ENCODE measurements at regions of chr15 and their contacts with region 1.

Region 1: DNA sequence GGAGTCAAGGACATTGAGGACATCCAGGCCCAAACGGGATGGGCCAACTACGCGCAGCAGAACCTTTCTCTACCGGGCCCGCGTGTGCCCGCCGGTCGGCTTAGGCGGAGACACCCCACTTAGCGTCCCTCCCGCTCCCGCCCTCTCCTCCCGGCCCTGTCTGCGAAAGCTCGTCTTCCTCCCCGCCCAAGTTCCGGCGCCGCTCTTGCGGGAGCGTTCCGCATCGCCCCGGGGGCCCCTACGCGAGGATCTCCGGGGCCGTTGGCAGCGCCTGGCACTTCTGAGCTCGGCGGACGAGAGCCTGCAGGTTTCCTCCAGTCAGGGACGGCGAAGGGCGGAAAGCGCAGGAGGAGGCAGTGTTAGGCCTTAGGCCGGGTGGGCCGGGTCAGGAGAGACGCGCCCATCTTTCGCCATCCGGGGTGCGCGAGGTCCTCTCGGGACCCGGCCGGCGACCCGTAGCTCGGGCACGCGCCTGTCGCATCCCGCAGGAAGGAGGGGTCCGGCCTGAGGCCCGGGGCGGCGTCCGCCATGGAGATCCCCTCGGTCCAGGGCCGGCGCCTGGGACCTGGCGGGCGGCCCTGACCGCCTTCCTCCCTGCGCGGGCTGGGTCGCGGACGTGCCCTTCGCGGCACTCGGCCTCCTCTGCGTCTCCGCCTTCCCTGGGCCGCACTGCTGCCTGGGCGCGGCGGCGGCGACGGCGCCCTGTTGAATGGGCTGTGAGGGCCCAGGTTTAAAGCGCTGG is at the start of gene FEM1B:
- DNase-seq: peak; percentile 97
- H3K4me3 ChIP-seq: peak within 1 kb of the TSS; percentile 68 to 92 (median 80)
- H3K27ac ChIP-seq: peak within 1 kb of the TSS; percentile 98 to 99 (median 98)
- H3K4me1 ChIP-seq: peaks cover 0 to 69% (median 47%) of the 10 kb centered on the region in 4 donors
- H3K27me3 ChIP-seq: no peaks in the 10 kb centered on the region
- CTCF ChIP-seq: no peak
- EP300 ChIP-seq: peak in 2 of 4 donors; percentile 26 to 36
- POLR2A ChIP-seq: peak; percentile 54 to 56
- total RNA-seq, gene FEM1B: 54.7 to 64.2 (median 62.8) TPM

Region 2: DNA sequence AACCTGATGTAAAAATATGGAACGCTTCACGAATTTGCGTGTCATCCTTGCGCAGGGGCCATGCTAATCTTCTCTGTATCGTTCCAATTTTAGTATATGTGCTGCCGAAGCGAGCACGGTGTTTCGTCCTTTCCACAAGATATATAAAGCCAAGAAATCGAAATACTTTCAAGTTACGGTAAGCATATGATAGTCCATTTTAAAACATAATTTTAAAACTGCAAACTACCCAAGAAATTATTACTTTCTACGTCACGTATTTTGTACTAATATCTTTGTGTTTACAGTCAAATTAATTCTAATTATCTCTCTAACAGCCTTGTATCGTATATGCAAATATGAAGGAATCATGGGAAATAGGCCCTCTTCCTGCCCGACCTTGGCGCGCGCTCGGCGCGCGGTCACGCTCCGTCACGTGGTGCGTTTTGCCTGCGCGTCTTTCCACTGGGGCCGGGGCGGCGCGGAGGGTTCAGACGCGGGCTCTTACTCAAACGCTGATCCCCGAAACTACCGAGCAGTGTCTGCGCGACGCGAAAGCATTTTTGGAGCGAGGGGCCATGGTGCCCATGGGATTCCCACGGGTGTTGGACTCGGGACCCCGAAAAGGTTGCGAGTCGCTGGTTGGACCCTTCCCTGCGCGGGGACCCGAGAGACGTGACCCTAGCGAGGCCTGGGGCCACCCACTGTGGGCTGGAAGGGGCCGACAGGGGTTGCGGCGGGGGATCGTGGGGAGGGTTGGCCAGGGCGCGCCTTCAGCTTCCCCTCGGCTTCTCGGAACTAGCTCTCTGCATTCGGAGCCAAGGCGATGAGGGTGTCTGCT is 437.6 kb before region 1 on chr15 and contains the start of gene RNU6-1:
- intact Hi-C with region 1: loop called (anchors 5 kb)
- DNase-seq: peak; percentile 97
- H3K4me3 ChIP-seq: peak within 1 kb of the TSS; percentile 89 to 95 (median 91)
- H3K27ac ChIP-seq: peak within 1 kb of the TSS; percentile 97 to 100 (median 99)
- H3K4me1 ChIP-seq: peaks cover 0 to 62% (median 51%) of the 10 kb centered on the region in 4 donors
- H3K27me3 ChIP-seq: peaks cover 8 to 11% (median 9%) of the 10 kb centered on the region in 3 donors
- CTCF ChIP-seq: no peak
- EP300 ChIP-seq: peak in 1 of 4 donors; percentile 52
- POLR2A ChIP-seq: peak; percentile 92 to 96
- total RNA-seq, gene RNU6-1: not detected

Region 3: GRCh38 chr15:68566377-68566954 is 288.7 kb after region 1 on chr15:
- intact Hi-C with region 1: no loop called
- DNase-seq: peak; percentile 43
- H3K4me3 ChIP-seq: no peak overlapping the region
- H3K27ac ChIP-seq: no peak overlapping the region
- H3K4me1 ChIP-seq: no peaks in the 10 kb centered on the region
- H3K27me3 ChIP-seq: peaks cover 0 to 28% (median 0%) of the 10 kb centered on the region in 3 donors
- CTCF ChIP-seq: no peak
- EP300 ChIP-seq: no peak
- POLR2A ChIP-seq: no peak

Measured in sigmoid colon (tissue), 7 donors.